Activated CD4-positive, alpha-beta T cell treated with anti-CD3 and anti-CD28 coated beads for 36 hours (primary cell): ENCODE measurements at regions of chr12 and their contacts with region 1.

Region 1: DNA sequence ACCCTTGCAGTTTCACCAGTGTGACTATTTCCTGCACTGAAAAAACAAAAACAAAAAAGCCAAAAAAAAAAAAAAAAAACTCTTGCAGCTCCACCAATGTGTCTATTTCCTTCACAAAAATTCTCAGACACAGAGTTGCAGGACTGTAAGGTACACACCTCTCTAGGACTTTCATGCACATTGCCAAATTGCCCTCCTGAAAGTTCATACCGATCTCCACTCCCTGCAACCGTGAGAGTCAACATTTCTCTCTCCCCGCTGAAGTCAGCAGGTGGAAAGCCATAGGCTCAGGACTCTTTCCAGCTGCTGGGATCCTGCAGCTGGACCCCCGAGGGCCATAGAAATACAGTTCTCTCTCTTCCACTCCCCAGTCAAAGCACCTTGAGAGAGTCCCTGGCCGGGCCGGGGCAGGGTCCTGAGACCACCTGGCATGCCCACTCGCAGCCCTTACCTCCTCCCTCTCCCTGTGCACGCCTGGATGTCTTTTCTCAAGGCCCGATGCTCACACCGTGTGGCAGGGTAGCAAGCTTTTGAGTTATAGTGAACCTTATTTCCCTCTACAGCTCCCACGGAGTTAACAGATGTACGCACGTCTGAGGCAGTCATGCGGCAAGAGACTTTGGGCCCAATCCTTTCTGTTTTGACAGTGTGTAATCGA is 23.6 kb downstream of the MMAB start:
- DNase-seq: no peak
- ATAC-seq: no peak
- H3K4me3 Mint-ChIP-seq: no peak overlapping the region
- H3K27ac Mint-ChIP-seq: no peak overlapping the region
- H3K4me1 Mint-ChIP-seq: peaks cover 5% of the 10 kb centered on the region
- H3K27me3 Mint-ChIP-seq: peaks cover 14% of the 10 kb centered on the region

Region 2: DNA sequence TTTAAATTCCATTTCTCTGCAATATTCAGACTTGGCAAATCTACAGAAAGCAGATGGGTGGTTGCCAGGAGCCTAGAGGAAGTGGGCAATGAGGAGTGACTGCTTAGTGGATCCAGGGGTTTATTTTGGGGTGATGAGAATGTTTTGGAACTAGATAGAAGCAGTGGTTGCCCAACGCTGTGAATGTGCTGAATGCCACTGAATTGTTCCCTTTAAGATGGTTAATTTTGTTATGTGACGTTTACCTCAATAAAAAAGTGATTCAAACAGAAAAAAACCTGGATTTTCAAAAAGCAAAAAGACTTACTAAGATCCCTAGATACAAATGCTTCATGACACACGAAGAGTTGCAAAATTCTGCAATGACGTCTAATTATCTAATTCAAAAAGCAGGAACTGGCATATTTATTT is 635.6 kb before region 1 on chr12:
- CTCF ChIA-PET with region 1: no interaction called
- POLR2A ChIA-PET with region 1: no interaction called
- intact Hi-C with region 1: loop called in 1 of 2 experiments (anchors 5 kb)
- DNase-seq: no peak
- ATAC-seq: no peak
- H3K4me3 Mint-ChIP-seq: no peak overlapping the region
- H3K27ac Mint-ChIP-seq: no peak overlapping the region
- H3K4me1 Mint-ChIP-seq: no peaks in the 10 kb centered on the region
- H3K27me3 Mint-ChIP-seq: peaks cover 2% of the 10 kb centered on the region

Region 3: GRCh38 chr12:109309381-109310246 is 240.1 kb before region 1 on chr12:
- CTCF ChIA-PET with region 1: no interaction called
- POLR2A ChIA-PET with region 1: no interaction called
- intact Hi-C with region 1: no loop called
- DNase-seq: peak; percentile 32
- ATAC-seq: peak; percentile 47
- H3K4me3 Mint-ChIP-seq: peak overlapping the region; percentile 63
- H3K27ac Mint-ChIP-seq: no peak overlapping the region
- H3K4me1 Mint-ChIP-seq: peaks cover 9% of the 10 kb centered on the region
- H3K27me3 Mint-ChIP-seq: peaks cover 45% of the 10 kb centered on the region